Sigmoid colon (tissue), 7 donors: ENCODE measurements at regions of chr10 and their contacts with region 1.

Region 1: GRCh38 chr10:3293581-3294431 is 121.2 kb upstream of the PITRM1 start:
- DNase-seq: no peak
- H3K4me3 ChIP-seq: no peak overlapping the region
- H3K27ac ChIP-seq: peak overlapping the region; percentile 34 to 84 (median 65)
- H3K4me1 ChIP-seq: peaks cover 0 to 27% (median 21%) of the 10 kb centered on the region in 4 donors
- H3K27me3 ChIP-seq: no peaks in the 10 kb centered on the region
- CTCF ChIP-seq: no peak
- EP300 ChIP-seq: no peak
- POLR2A ChIP-seq: no peak

Region 2: GRCh38 chr10:3339531-3339950 is 45.7 kb after region 1 on chr10:
- intact Hi-C with region 1: no loop called
- DNase-seq: no peak
- H3K4me3 ChIP-seq: no peak overlapping the region
- H3K27ac ChIP-seq: no peak overlapping the region
- H3K4me1 ChIP-seq: peaks cover 0 to 3% (median 0%) of the 10 kb centered on the region in 4 donors
- H3K27me3 ChIP-seq: no peaks in the 10 kb centered on the region
- CTCF ChIP-seq: no peak
- EP300 ChIP-seq: no peak
- POLR2A ChIP-seq: no peak

Region 3: GRCh38 chr10:3393958-3394357 is 100.2 kb after region 1 on chr10:
- intact Hi-C with region 1: loop called (anchors 5 kb)
- DNase-seq: no peak
- H3K4me3 ChIP-seq: no peak overlapping the region
- H3K27ac ChIP-seq: peak overlapping the region in 2 of 4 donors; percentile 63 to 79
- H3K4me1 ChIP-seq: peaks cover 0 to 42% (median 31%) of the 10 kb centered on the region in 4 donors
- H3K27me3 ChIP-seq: no peaks in the 10 kb centered on the region
- CTCF ChIP-seq: no peak
- EP300 ChIP-seq: no peak
- POLR2A ChIP-seq: no peak

Region 4: GRCh38 chr10:3472287-3473051 is 178.7 kb after region 1 on chr10:
- intact Hi-C with region 1: loop called (anchors 5 kb)
- DNase-seq: peak; percentile 80
- H3K4me3 ChIP-seq: peak overlapping the region; percentile 6 to 31 (median 27)
- H3K27ac ChIP-seq: peak overlapping the region; percentile 85 to 91 (median 90)
- H3K4me1 ChIP-seq: peaks cover 0 to 56% (median 55%) of the 10 kb centered on the region in 4 donors
- H3K27me3 ChIP-seq: no peaks in the 10 kb centered on the region
- CTCF ChIP-seq: no peak
- EP300 ChIP-seq: peak in 2 of 4 donors; percentile 76 to 88
- POLR2A ChIP-seq: no peak

Region 5: DNA sequence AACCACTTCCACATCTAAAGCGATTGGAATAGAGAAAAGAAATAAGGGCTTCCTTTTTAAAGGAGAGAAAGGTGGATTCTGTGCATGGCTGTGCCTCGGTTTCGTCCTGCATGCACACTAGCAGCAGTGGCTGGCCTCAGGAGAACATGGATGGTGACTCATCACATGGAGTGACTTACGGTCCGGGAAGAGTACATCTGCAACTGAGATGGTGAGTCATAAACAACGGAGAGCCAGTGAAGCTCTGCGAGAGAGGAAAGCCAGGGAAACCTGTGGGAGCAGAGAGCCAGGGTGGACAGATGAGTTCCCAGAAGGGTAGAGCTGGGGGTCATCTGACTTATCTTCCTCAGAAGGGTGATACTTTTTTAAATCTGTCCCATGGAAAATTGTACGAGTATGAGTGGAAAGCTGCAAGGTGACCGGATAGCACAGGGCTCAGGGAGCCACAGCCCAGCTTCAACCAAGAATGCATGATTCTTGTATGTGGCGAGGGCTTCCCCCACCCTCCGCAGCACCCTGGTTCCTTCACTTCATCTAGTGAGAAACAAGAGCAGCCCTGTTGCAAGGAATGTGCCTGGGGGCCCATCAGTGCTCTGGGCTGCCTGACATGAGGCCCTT is 232.1 kb after region 1 on chr10:
- intact Hi-C with region 1: loop called (anchors 10 kb)
- DNase-seq: peak; percentile 80
- H3K4me3 ChIP-seq: no peak overlapping the region
- H3K27ac ChIP-seq: peak overlapping the region; percentile 67 to 82 (median 75)
- H3K4me1 ChIP-seq: peaks cover 0 to 38% (median 21%) of the 10 kb centered on the region in 4 donors
- H3K27me3 ChIP-seq: no peaks in the 10 kb centered on the region
- CTCF ChIP-seq: no peak
- EP300 ChIP-seq: peak in 1 of 4 donors; percentile 85
- POLR2A ChIP-seq: no peak

Region 6: DNA sequence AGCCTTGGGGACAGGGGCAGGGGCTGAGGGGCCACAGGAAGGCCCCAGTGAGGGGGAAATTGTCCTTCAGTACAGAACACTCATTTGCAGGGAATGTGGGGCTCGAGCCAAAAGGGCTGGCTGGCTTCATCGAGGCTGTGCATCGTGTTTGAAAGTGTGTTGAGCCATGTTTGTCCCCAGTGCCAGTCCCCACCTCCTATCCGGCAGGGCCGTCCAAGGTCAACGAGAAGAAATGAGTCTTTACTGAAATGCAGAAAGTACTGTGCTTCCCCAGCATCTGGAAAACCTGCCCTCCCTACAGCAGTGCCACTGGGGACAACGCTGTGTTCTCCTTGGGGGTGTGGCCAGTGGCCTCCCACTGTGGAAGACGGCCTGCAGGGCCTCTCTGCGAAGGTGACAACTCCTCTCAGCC is 277.1 kb after region 1 on chr10:
- intact Hi-C with region 1: no loop called
- DNase-seq: peak; percentile 82
- H3K4me3 ChIP-seq: no peak overlapping the region
- H3K27ac ChIP-seq: peak overlapping the region; percentile 35 to 53 (median 47)
- H3K4me1 ChIP-seq: peaks cover 0 to 15% (median 5%) of the 10 kb centered on the region in 4 donors
- H3K27me3 ChIP-seq: no peaks in the 10 kb centered on the region
- CTCF ChIP-seq: no peak
- EP300 ChIP-seq: no peak
- POLR2A ChIP-seq: no peak

Region 7: DNA sequence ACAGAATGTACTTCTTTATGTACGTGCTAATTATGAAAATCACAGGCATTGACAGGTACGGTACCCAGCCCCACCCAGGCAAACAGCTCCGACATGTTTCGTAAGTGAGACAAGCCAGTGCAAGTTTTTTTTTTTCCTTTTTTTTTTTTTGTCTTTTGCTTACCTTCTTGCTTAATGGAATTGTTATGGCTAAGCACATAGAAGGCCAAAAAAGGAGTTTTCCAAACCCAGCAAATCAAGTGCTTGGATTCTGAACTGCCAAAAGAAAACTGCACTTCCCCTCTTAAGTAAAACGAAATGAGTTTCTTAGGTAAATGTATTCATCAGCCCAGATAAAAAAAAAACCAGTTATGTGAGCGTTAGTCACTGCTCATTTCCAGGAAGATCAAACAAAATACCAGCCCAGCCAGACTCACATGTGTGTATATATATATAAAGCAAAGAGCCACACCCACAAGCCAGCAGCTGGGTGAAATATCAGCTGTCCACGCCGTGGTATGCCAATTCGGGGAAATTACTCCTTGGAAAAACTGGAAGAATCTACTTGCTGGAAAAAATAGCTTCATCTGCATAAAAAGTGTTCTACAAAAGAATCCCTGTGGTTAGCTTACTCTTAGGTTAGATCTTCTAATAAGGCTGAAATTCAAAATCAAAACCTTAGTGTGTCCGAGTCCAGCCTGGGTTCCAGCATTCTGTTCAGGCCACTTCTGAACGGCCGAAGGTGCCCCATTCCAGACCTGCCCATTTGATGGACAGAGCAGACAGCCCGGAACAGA is 483.2 kb after region 1 on chr10:
- intact Hi-C with region 1: loop called (anchors 5 kb)
- DNase-seq: peak; percentile 76
- H3K4me3 ChIP-seq: peak overlapping the region in 1 of 4 donors; percentile 7
- H3K27ac ChIP-seq: peak overlapping the region; percentile 98 to 100 (median 100)
- H3K4me1 ChIP-seq: peaks cover 0 to 74% (median 73%) of the 10 kb centered on the region in 4 donors
- H3K27me3 ChIP-seq: no peaks in the 10 kb centered on the region
- CTCF ChIP-seq: no peak
- EP300 ChIP-seq: peak in 3 of 4 donors; percentile 32 to 93 (median 75)
- POLR2A ChIP-seq: no peak